ENCODE measurements at regions of chr2 and their contacts with region 1.

Region 1: GRCh38 chr2:86623651-86624541 is at the start of gene RNF103:
- DNase-seq: peak; percentile 97 to 99 (median 99)
- ATAC-seq: peak; percentile 98
- H3K4me3 ChIP-seq: peak within 1 kb of the TSS; percentile 82
- H3K27ac ChIP-seq: peak within 1 kb of the TSS; percentile 97
- H3K4me1 ChIP-seq: no peaks in the 10 kb centered on the region
- H3K27me3 ChIP-seq: no peaks in the 10 kb centered on the region
- total RNA-seq, gene RNF103: 37.1 to 46.2 (median 43.5) TPM

Region 2: DNA sequence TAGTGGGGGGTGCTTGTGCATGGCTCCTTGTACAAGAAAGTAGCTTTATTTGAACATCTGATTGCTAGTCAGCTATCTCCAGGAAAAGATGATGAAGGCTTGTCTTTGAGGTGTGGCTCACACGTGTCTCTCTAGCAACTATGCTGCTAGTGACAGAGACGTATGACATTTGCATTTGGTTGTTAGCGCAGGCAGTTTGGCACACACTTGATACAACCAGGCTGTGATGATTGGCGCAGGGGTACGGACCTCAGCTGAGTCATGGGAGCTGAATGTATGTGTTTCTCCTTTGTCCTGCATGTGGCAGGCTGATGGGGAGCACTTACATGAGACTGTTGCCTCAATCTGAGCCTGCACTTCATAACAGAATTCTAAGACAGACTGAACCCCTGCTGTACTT is 488.2 kb before region 1 on chr2:
- intact Hi-C with region 1: no loop called
- DNase-seq: no peak
- ATAC-seq: no peak
- H3K4me3 ChIP-seq: no peak overlapping the region
- H3K27ac ChIP-seq: no peak overlapping the region
- H3K4me1 ChIP-seq: no peaks in the 10 kb centered on the region
- H3K27me3 ChIP-seq: no peaks in the 10 kb centered on the region

Region 3: DNA sequence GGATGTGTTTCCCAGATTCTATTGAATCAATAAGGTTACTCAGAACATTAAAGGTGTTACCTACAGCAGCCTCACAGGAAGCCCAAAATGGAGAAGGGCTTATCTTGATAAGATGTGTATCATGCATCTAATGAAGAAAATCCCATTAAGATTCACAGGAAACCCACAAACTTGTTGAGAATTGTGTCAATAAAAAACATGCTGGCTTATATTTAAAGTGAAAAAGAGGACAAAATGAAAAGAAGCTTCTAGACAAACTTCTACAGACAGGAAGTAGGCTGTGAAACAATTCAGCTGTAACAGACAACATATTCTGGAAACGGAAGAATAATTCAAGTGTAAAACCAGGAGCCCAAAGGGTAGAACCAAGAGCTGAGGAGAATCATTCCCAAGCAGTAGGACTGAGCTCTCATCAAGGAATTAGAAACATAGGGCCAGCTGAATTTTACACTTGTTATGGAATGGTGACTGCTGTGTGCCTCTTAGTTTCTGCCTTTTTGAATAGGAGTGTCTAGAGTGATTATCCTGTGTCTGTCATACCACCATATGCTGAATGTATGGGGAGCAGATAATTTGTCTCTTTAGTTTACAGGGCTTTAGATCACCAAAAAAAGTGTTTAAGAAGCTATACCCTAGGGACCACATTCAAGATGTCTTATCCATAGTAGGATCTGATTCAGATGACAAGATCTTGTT is 438.2 kb before region 1 on chr2:
- intact Hi-C with region 1: no loop called
- DNase-seq: no peak
- ATAC-seq: peak in 1 of 2 donors; percentile 8
- H3K4me3 ChIP-seq: no peak overlapping the region
- H3K27ac ChIP-seq: no peak overlapping the region
- H3K4me1 ChIP-seq: no peaks in the 10 kb centered on the region
- H3K27me3 ChIP-seq: no peaks in the 10 kb centered on the region

Region 4: GRCh38 chr2:86562922-86563649 is 60.8 kb before region 1 on chr2 and contains the start of gene CHMP3:
- intact Hi-C with region 1: loop called in 2 of 4 experiments (anchors 5 to 10 kb)
- DNase-seq: peak; percentile 98 to 99 (median 98)
- ATAC-seq: peak; percentile 98
- H3K4me3 ChIP-seq: peak within 1 kb of the TSS; percentile 79
- H3K27ac ChIP-seq: peak within 1 kb of the TSS; percentile 99
- H3K4me1 ChIP-seq: peaks cover 6% of the 10 kb centered on the region
- H3K27me3 ChIP-seq: no peaks in the 10 kb centered on the region
- total RNA-seq, gene CHMP3: 144 to 164 (median 155) TPM

Region 5: GRCh38 chr2:86704459-86704971 is 80.6 kb after region 1 on chr2:
- intact Hi-C with region 1: loop called in 1 of 4 experiments (anchors 10 kb)
- DNase-seq: peak in 2 of 3 donors; percentile 20 to 43
- ATAC-seq: peak; percentile 82 to 87
- H3K4me3 ChIP-seq: no peak overlapping the region
- H3K27ac ChIP-seq: peak overlapping the region; percentile 93
- H3K4me1 ChIP-seq: no peaks in the 10 kb centered on the region
- H3K27me3 ChIP-seq: no peaks in the 10 kb centered on the region